Ascending aorta (tissue), 2 donors: ENCODE measurements at regions of chr18 and their contacts with region 1.

Region 1: DNA sequence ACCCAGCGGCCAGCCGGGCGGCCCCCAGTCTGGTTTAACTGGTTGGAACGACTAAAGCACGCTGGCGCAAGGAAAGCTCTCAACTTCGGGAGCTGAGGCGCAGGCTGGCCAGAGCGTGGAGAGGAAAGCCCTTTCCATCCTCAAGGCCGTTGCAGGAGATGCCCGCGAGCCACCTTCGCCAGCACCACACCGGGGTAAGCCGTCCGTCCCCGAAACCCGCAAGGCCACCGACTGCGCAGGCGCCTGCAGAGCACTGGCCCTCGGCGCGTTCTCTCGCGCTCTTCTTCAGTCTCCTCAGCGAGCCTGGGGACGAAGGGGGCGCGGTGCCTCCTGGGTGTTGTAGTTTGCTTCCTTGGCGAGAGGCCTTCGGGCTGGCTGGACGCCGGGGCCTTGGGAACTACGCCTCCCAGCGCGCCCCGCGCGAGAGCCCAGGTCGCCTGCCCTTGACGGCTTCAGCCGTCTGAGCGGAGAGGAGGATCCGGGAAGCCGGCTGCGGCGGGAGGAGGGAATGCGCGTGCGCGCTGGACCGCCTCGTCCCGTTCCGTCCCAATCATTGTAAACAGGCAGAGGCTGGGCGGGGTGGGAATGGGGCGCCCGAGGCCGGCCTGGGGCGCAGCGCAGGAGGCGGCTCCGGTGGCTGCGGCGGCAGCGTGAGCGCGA is at the start of gene RALBP1:
- DNase-seq: peak; percentile 97 to 100
- H3K4me3 ChIP-seq: peak within 1 kb of the TSS; percentile 95 to 98
- H3K27ac ChIP-seq: peak within 1 kb of the TSS; percentile 88 to 90
- H3K4me1 ChIP-seq: peaks cover 0 to 5% of the 10 kb centered on the region in 2 donors
- H3K27me3 ChIP-seq: no peaks in the 10 kb centered on the region
- CTCF ChIP-seq: peak in 1 of 3 experiments; percentile 35
- total RNA-seq, gene RALBP1: 67.2 TPM

Region 2: GRCh38 chr18:8704361-8705279 is 770.5 kb before region 1 on chr18:
- intact Hi-C with region 1: loop called (anchors 10 kb)
- DNase-seq: peak; percentile 39 to 92
- H3K4me3 ChIP-seq: peak overlapping the region; percentile 79 to 97
- H3K27ac ChIP-seq: peak overlapping the region; percentile 89 to 96
- H3K4me1 ChIP-seq: peaks cover 4 to 11% of the 10 kb centered on the region in 2 donors
- H3K27me3 ChIP-seq: no peaks in the 10 kb centered on the region
- CTCF ChIP-seq: peak in 1 of 3 experiments; percentile 4

Region 3: DNA sequence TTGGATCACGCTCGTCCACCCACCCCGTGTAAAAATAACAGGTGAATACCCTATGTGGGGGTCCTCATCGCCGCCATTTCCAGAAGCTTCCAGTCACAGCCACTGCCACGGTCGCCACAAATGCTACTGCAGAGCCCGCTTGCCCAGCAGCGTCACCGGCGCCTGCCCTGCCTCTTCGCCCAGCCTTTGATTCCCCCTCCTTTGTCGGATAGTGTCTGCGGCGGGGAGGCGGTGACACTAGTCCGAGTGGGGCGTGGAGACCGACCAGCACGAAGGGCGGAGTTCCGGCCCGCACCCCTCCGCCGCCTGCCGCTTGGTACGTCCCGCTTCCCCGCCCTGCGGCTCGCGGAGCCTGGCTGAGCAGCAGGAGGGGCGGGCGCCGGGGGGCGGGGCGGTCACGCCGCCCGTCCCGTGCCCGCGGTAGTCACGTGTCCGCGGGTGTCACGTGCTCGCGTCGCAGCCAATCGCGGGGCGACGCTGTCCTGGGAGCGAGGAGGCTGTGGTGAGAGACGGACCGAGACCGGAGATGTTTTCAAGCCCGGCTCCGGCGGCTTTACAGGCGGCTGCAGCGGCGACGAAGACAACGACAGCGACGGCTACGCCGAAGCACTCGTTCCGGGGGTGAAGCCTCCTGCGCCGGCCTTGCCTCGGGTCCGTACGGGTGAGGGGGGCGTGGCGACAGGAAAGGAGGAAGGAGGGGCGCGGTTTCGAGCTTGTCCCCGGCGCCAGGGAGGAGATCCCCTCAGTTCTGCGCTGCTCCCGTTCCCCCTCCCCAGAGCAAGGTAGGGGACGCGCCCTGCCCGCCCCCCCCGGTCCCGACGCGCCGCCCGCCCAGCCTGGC is 338.6 kb before region 1 on chr18 and contains the start of gene ANKRD12:
- intact Hi-C with region 1: loop called (anchors 2 kb)
- DNase-seq: peak; percentile 87 to 99
- H3K4me3 ChIP-seq: peak within 1 kb of the TSS; percentile 87 to 93
- H3K27ac ChIP-seq: peak within 1 kb of the TSS; percentile 96 to 99
- H3K4me1 ChIP-seq: peaks cover 4 to 37% of the 10 kb centered on the region in 2 donors
- H3K27me3 ChIP-seq: no peaks in the 10 kb centered on the region
- CTCF ChIP-seq: no peak
- total RNA-seq, gene ANKRD12: 11.4 TPM

Region 4: GRCh38 chr18:9366192-9366591 is 108.9 kb before region 1 on chr18:
- intact Hi-C with region 1: loop called (anchors 2 kb)
- DNase-seq: peak in 1 of 2 donors; percentile 70
- H3K4me3 ChIP-seq: no peak overlapping the region
- H3K27ac ChIP-seq: peak overlapping the region; percentile 32 to 54
- H3K4me1 ChIP-seq: peaks cover 2 to 27% of the 10 kb centered on the region in 2 donors
- H3K27me3 ChIP-seq: no peaks in the 10 kb centered on the region
- CTCF ChIP-seq: peak in 2 of 3 experiments; percentile 34 to 47

Region 5: DNA sequence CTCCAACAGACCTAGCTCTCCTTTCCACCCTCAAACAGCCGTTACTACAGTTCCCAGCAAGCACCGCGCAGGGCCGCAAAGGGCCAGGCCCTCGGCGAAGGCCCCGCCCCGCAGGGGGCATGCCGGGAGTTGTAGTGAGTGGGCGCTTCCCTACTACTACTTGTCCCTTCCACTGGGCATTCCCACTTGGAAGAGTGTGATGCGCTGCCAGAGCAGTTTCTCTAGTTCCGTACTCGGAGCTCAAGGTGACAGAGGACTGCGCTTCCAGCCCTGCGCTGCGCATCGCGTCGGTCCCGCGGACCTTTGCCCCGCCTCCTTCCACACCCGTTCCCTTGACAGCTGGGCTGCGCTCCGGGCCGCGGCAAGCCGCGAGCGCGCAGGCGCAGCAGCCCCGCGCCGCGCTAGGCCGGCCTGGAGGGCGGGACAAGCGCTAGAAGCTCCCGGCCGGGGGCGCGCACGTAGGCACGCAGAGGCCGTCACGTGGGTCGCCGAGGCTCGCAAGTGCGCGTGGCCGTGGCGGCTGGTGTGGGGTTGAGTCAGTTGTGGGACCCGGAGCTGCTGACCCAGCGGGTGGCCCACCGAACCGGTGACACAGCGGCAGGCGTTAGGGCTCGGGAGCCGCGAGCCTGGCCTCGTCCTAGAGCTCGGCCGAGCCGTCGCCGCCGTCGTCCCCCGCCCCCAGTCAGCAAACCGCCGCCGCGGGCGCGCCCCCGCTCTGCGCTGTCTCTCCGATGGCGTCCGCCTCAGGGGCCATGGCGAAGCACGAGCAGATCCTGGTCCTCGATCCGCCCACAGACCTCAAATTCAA is 438.6 kb after region 1 on chr18 and contains the start of gene VAPA:
- intact Hi-C with region 1: loop called (anchors 5 kb)
- DNase-seq: peak; percentile 85 to 97
- H3K4me3 ChIP-seq: peak within 1 kb of the TSS; percentile 96 to 97
- H3K27ac ChIP-seq: peak within 1 kb of the TSS; percentile 99 to 100
- H3K4me1 ChIP-seq: peaks cover 3 to 21% of the 10 kb centered on the region in 2 donors
- H3K27me3 ChIP-seq: no peaks in the 10 kb centered on the region
- CTCF ChIP-seq: no peak
- total RNA-seq, gene VAPA: 109 TPM